ENCODE measurements at regions of chr1 and their contacts with region 1.

Region 1: GRCh38 chr1:224192082-224192788 is 9.2 kb downstream of the DEGS1 start:
- DNase-seq: no peak
- ATAC-seq: peak; percentile 17; the same call in 1 of the 3 replicates
- H3K4me3 ChIP-seq: no peak overlapping the region
- H3K27ac ChIP-seq: no peak overlapping the region
- H3K4me1 ChIP-seq: no peaks in the 10 kb centered on the region; the same call in 1 of the 2 replicates
- H3K27me3 ChIP-seq: no peaks in the 10 kb centered on the region
- CTCF ChIP-seq: no peak
- EP300 ChIP-seq: no peak
- POLR2A ChIP-seq: no peak
- RAD21 ChIP-seq: no peak

Region 2: GRCh38 chr1:224149713-224150112 is 42.5 kb before region 1 on chr1:
- CTCF ChIA-PET with region 1: no interaction called
- POLR2A ChIA-PET with region 1: no interaction called
- RAD21 ChIA-PET with region 1: no interaction called
- SMC1A ChIA-PET with region 1: no interaction called
- in situ Hi-C with region 1: no loop called
- intact Hi-C with region 1: no loop called
- DNase-seq: no peak
- ATAC-seq: no peak
- H3K4me3 ChIP-seq: no peak overlapping the region
- H3K27ac ChIP-seq: no peak overlapping the region
- H3K4me1 ChIP-seq: no peaks in the 10 kb centered on the region
- H3K27me3 ChIP-seq: no peaks in the 10 kb centered on the region
- CTCF ChIP-seq: no peak
- EP300 ChIP-seq: no peak
- POLR2A ChIP-seq: no peak
- RAD21 ChIP-seq: no peak

Region 3: DNA sequence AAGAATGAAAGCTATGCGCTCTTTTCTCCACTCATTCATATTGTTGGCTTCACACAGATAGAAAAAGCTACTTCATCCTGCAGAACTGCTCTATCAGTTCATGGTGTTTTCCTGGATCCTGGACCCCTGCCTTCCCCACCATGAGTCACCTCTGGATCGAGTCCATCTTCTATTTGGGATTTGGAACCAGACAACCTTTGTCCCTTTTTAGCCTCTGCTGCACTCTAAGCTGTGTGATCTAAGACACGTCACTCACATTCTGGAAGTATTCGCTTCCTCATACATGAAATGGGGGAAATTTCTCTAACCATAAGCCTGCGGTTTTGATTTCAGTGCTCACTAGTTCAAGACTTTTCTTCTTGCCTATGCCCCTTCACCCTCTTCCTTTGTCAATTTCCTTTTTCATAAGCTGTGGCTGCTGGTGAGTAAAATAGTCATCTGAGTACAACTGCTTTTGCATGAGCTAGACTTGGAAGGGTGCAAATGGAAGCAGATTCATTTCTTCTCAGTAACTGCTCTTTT is 23.3 kb before region 1 on chr1:
- CTCF ChIA-PET with region 1: no interaction called
- POLR2A ChIA-PET with region 1: interaction called, 3 read pairs
- RAD21 ChIA-PET with region 1: interaction called, 5 read pairs
- SMC1A ChIA-PET with region 1: interaction called, 10 read pairs
- in situ Hi-C with region 1: no loop called
- intact Hi-C with region 1: no loop called
- DNase-seq: peak; percentile 90
- ATAC-seq: peak; percentile 95
- H3K4me3 ChIP-seq: no peak overlapping the region
- H3K27ac ChIP-seq: no peak overlapping the region
- H3K4me1 ChIP-seq: peaks cover 13% of the 10 kb centered on the region
- H3K27me3 ChIP-seq: no peaks in the 10 kb centered on the region
- CTCF ChIP-seq: no peak
- EP300 ChIP-seq: peak in 1 of 2 experiments; percentile 75; a peak in 1 of 4 replicates
- POLR2A ChIP-seq: no peak
- RAD21 ChIP-seq: no peak

Region 4: GRCh38 chr1:224203243-224204016 is 11.2 kb after region 1 on chr1:
- CTCF ChIA-PET with region 1: interaction called, 4 read pairs
- POLR2A ChIA-PET with region 1: interaction called, 7 read pairs
- RAD21 ChIA-PET with region 1: interaction called, 5 read pairs
- SMC1A ChIA-PET with region 1: interaction called, 12 read pairs
- in situ Hi-C with region 1: no loop called
- intact Hi-C with region 1: loop called (anchors 2 kb)
- DNase-seq: peak; percentile 70
- ATAC-seq: peak; percentile 75
- H3K4me3 ChIP-seq: no peak overlapping the region
- H3K27ac ChIP-seq: no peak overlapping the region
- H3K4me1 ChIP-seq: peaks cover 27% of the 10 kb centered on the region
- H3K27me3 ChIP-seq: no peaks in the 10 kb centered on the region
- CTCF ChIP-seq: no peak
- EP300 ChIP-seq: peak in 1 of 2 experiments; percentile 79; a peak in 2 of 4 replicates
- POLR2A ChIP-seq: no peak
- RAD21 ChIP-seq: no peak

Measured in GM12878 (cell line).